A673 (cell line): ENCODE measurements at regions of chr1 and their contacts with region 1.

Region 1: GRCh38 chr1:178076607-178077006 is 17.3 kb upstream of the RASAL2 start:
- DNase-seq: no peak
- H3K4me3 ChIP-seq: no peak overlapping the region
- H3K27ac ChIP-seq: no peak overlapping the region
- H3K4me1 ChIP-seq: no peaks in the 10 kb centered on the region
- H3K27me3 ChIP-seq: no peaks in the 10 kb centered on the region
- CTCF ChIP-seq: no peak

Region 2: DNA sequence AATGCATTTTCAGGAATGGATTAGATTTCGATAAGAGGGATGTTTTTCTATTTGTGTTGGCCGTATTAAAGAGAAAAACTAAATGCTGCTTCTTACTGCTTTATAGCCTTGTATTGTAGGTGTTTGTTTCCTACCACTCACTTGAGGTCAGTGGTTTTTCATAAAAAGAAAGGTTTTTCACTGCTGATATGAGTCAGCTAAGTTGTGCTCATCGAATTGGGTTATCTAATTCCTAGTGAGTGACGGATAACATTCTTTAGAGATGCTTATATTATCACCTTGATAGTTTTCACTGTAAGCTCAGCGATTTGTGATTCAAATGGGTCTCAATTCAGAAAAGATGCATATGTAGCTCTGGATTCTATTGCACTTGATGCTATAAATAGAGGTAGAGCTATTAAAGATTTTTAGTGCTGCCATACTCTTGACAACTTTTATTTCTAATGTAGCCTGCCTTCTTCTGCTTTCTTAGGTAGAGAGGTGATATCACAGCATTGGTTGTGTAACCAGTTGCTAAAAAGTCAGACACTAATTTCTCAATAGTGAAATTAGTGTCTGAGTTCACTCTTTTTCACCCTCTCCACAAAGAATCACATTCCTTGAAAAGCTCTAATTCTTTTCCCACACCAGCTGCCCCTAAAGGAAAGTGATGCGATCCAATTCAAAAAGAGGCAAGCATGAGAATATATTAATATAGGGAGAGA is 197.3 kb after region 1 on chr1:
- CTCF ChIA-PET with region 1: interaction called, 13 read pairs
- POLR2A ChIA-PET with region 1: no interaction called
- intact Hi-C with region 1: no loop called
- DNase-seq: no peak
- H3K4me3 ChIP-seq: no peak overlapping the region
- H3K27ac ChIP-seq: no peak overlapping the region
- H3K4me1 ChIP-seq: no peaks in the 10 kb centered on the region
- H3K27me3 ChIP-seq: no peaks in the 10 kb centered on the region
- CTCF ChIP-seq: no peak